CD8-positive, alpha-beta T cell (primary cell): ENCODE measurements at regions of chr7 and their contacts with region 1.

Region 1: GRCh38 chr7:145978769-145979168 is 137.8 kb upstream of the CNTNAP2 start:
- DNase-seq: no peak
- ATAC-seq: no peak
- H3K4me3 ChIP-seq: no peak overlapping the region
- H3K4me3 Mint-ChIP-seq: no peak overlapping the region
- H3K27ac ChIP-seq: no peak overlapping the region
- H3K27ac Mint-ChIP-seq: no peak overlapping the region
- H3K4me1 ChIP-seq: no peaks in the 10 kb centered on the region
- H3K4me1 Mint-ChIP-seq: no peaks in the 10 kb centered on the region
- H3K27me3 ChIP-seq: no peaks in the 10 kb centered on the region
- H3K27me3 Mint-ChIP-seq: no peaks in the 10 kb centered on the region
- CTCF ChIP-seq: no peak

Region 2: DNA sequence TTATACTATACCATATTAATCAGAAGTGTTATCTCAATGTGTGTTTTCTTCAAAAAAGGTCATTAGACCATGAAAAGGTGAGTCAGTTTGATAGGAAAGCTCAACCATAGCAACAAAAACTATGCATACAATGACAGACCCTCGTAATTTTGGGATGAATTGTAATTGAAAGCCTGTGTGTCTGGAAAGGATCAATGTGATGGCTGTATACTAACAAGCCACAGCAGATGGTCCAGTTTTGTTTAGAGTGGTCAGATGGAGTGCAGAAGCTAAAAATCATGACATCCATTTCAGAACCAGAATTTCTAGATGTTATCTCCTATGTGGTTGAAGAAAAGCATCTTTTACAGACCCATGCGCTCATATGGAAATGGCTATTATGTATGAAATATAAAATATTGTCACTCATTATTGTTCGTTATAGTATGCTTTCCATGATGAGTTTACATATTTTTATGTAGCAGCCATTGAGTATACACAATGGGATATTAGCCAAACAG is 49.5 kb after region 1 on chr7:
- CTCF ChIA-PET with region 1: no interaction called
- POLR2A ChIA-PET with region 1: no interaction called
- intact Hi-C with region 1: loop called in 1 of 2 experiments (anchors 5 kb)
- DNase-seq: no peak
- ATAC-seq: no peak
- H3K4me3 ChIP-seq: no peak overlapping the region
- H3K4me3 Mint-ChIP-seq: no peak overlapping the region
- H3K27ac ChIP-seq: no peak overlapping the region
- H3K27ac Mint-ChIP-seq: no peak overlapping the region
- H3K4me1 ChIP-seq: no peaks in the 10 kb centered on the region
- H3K4me1 Mint-ChIP-seq: no peaks in the 10 kb centered on the region
- H3K27me3 ChIP-seq: no peaks in the 10 kb centered on the region
- H3K27me3 Mint-ChIP-seq: no peaks in the 10 kb centered on the region
- CTCF ChIP-seq: no peak